ENCODE measurements at regions of chr6 and their contacts with region 1.

Region 1: DNA sequence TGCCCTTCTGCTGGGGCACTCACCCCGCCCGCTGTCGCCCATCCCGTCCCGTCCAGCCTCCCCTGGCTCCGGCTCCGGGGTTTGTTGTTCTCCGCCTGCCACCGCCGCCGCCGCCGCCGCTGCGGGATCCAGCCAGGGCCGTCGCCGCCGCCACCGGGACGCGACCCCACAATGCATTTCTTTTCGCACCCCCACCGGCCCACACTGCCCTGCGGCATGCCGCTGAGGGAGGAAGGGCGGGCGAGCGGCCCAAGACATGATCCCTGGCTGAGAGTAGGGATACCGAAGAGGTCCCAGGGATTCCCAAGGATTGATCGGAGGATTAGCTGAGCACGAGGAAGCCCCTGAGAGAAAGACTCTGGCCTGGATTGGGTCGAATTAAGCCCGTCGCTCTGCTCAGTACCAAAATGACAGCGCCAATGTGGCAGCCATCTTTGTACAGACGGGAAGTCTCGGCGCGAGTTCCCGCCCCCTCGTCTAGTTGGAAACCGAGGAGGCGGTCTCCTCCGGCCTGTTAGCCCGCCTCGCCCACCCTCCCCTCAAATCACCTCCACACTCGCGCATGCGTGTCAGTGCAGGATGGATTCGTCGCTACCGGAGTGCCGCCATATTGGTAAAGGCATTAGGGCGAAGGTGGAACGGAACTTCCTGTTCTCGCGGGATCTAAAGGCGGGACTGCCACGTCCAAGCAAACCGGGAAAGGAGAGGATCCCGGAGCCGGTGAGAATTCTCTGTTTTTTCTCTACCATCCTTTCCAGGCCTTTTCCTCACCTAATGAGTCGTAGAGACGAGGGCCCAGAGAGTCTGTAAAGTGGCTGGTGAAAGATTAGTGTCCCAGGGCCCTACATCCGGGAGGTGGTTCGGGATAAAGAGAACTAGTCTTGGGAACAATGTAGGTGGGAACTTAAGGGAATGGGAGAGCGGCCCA is at the starts of genes RXRB and SLC39A7:
- DNase-seq: peak; percentile 88 to 100 (median 94)
- ATAC-seq: peak; percentile 74
- H3K4me3 ChIP-seq: peak within 1 kb of the TSS; percentile 65
- H3K27ac ChIP-seq: peak within 1 kb of the TSS; percentile 99
- H3K4me1 ChIP-seq: peaks cover 48 to 51% of the 10 kb centered on the region in 2 experiments; a peak in 4 of 5 replicates
- H3K27me3 ChIP-seq: no peaks in the 10 kb centered on the region
- CTCF ChIP-seq: no peak
- EP300 ChIP-seq: no peak
- POLR2A ChIP-seq: peak; percentile 99
- RAD21 ChIP-seq: no peak; a peak in 1 of 4 replicates
- polyA plus RNA-seq, gene RXRB: 0.76 to 2.1 TPM
- polyA plus RNA-seq, gene SLC39A7: 21.7 to 23.5 TPM

Region 2: DNA sequence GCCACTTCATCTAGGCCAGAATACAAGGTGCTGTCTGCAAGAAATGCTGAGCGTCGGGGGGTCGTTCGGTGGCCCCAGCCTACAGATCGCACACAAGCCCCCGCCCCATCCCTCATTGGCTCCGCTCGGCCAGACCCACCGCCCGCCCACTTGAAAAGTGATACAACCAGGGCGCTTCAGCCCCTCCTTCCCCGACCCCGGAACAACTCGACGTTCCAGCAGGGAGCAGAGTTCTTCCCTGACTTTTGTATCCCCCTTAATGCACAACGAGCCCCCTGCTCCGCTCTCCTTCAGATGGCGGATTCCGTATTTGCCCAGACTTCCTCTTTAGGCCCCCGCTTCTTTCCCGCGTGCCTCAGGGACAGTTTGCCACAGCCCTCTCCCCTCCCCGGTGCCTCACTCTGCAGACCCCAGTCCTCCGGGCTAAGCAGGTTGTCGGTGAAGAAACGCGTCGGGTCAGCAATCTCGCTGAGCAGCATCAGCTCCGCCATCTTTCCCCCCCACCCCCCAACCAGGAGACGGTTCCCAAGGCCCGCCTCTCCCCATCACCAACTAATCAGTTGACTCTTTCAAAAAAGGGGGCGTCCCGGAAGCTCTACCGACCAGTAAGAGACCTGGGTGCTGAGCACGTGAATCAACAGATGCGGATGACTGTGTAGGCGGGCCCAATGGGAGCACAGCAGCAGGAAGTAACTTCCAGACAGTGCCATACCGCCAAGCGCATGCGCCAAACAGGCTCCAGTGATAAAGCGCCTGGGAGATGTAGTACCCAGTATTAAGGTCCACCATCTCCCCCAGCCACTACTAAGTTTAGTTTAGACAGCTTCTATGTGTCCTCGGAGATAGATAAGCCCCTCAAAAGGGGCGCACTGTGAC is 1072.5 kb before region 1 on chr6 and contains the start of gene ATF6B:
- CTCF ChIA-PET with region 1: no interaction called
- POLR2A ChIA-PET with region 1: no interaction called
- in situ Hi-C with region 1: no loop called
- intact Hi-C with region 1: loop called (anchors 5 kb)
- DNase-seq: peak; percentile 97 to 100 (median 98)
- ATAC-seq: peak; percentile 88
- H3K4me3 ChIP-seq: peak within 1 kb of the TSS; percentile 91
- H3K27ac ChIP-seq: peak within 1 kb of the TSS; percentile 86
- H3K4me1 ChIP-seq: peaks cover 31 to 32% of the 10 kb centered on the region in 2 experiments
- H3K27me3 ChIP-seq: no peaks in the 10 kb centered on the region
- CTCF ChIP-seq: no peak
- EP300 ChIP-seq: peak; percentile 53; the same call in 1 of the 2 replicates
- POLR2A ChIP-seq: peak; percentile 85
- RAD21 ChIP-seq: no peak
- polyA plus RNA-seq, gene ATF6B: 20.7 to 26.1 TPM

Region 3: DNA sequence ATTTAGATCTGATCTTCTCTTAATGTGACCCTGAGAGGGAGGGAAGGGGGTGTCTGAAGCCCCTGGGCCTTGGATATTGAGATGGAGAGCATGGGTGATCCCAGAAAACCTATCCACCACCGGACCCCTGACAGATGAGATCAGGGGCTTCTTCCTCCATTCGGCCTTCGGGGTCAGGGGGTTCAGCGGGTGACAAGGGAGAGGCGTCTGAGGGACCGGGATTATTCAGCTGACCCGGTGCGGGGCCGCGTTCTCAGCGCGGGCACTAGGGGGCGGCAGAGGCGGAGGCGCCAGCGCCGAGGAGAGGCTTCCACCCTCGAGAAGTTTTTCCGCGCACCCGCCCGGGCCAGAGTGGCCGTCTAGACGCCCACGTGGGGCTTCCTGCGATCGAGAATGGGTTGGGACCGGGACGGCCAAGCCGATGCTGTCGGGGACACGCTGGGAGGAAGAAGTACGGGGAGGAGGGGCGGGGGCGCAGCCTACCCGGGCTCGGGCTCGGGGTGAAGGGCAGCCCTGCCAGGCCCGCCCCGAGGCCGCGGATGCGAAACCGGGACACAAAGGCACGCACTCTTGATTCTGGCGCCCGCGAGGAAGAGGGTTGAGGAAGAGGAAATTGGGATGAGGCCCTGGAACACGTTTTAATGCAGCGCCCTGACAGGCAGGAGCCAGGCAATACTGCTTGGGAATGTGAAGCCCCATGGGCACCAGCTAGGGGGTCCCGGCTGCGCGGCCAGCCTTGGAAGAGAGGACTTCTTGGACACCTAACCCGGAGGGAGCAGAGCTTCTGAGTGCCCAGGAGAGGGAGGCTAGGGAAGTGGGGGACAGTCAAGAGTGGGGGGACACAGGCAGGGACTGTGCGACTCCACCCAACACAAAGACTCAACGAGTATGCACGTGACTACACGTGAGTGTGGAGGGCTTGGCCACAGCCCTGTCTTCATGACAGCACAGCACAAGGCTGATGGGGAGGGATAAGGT is 38.8 kb before region 1 on chr6:
- CTCF ChIA-PET with region 1: interaction called, 5 read pairs
- POLR2A ChIA-PET with region 1: no interaction called
- in situ Hi-C with region 1: no loop called
- intact Hi-C with region 1: loop called (anchors 2 kb)
- DNase-seq: peak; percentile 83 to 95 (median 93)
- ATAC-seq: peak; percentile 97
- H3K4me3 ChIP-seq: peak overlapping the region; percentile 30
- H3K27ac ChIP-seq: no peak overlapping the region
- H3K4me1 ChIP-seq: peaks cover 7 to 26% of the 10 kb centered on the region in 2 experiments; a peak in 3 of 5 replicates
- H3K27me3 ChIP-seq: peaks cover 5 to 39% of the 10 kb centered on the region in 2 experiments; a peak in 3 of 5 replicates
- CTCF ChIP-seq: peak; percentile 93 to 96 (median 94)
- EP300 ChIP-seq: no peak
- POLR2A ChIP-seq: 0 out of 2 replicates have a peak, but pooled peaks have one; percentile 32
- RAD21 ChIP-seq: peak; percentile 66 to 83

Region 4: GRCh38 chr6:33217681-33218080 is 17.2 kb after region 1 on chr6:
- CTCF ChIA-PET with region 1: no interaction called
- POLR2A ChIA-PET with region 1: no interaction called
- in situ Hi-C with region 1: no loop called
- intact Hi-C with region 1: no loop called
- DNase-seq: peak in 3 of 4 experiments; percentile 5 to 6 (median 5)
- ATAC-seq: no peak
- H3K4me3 ChIP-seq: no peak overlapping the region
- H3K27ac ChIP-seq: no peak overlapping the region
- H3K4me1 ChIP-seq: peaks cover 0 to 22% of the 10 kb centered on the region in 2 experiments; a peak in 2 of 5 replicates
- H3K27me3 ChIP-seq: peaks cover 7 to 15% of the 10 kb centered on the region in 2 experiments; a peak in 4 of 5 replicates
- CTCF ChIP-seq: no peak
- EP300 ChIP-seq: no peak
- POLR2A ChIP-seq: no peak
- RAD21 ChIP-seq: no peak

Region 5: DNA sequence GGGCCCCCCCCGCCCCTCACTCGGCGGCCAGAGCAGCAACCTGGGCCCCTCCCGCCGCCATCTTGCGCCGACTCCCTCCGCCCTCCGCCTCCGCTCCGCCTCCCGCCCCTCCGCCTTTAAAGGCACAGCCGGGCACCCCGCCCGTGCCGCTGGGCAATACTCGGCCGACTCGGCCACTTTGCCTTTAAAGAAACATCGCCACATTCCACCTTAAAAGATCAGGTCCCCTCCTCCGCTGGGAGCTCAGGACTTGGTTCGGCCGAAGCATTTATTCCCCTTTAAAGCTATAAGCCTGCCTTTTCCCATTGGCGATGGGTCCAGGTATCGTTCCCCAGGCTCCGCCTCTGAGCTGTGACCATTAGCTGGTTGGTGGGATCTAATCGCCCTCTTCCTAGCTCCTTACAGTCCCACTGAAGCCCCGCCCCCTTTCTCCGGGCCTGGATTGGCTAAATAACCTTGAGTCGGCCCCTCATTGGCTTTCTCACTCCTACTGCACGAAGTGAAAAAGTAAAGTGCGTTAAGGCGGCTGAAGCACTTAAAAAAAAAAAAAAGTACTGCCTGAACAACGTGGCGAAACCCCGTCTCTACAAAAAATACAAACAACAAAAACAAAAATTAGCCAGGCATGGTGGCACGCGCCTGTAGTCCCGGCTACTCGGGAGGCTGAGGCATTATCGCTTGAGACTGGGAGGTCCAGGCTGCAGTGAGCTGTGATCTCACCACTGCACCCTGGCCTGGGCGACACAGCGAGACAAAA is 117.4 kb after region 1 on chr6 and contains the start of gene ZBTB22:
- CTCF ChIA-PET with region 1: no interaction called
- POLR2A ChIA-PET with region 1: no interaction called
- in situ Hi-C with region 1: no loop called
- intact Hi-C with region 1: loop called (anchors 2 kb)
- DNase-seq: peak; percentile 90 to 100 (median 94)
- ATAC-seq: peak; percentile 82
- H3K4me3 ChIP-seq: peak within 1 kb of the TSS; percentile 63
- H3K27ac ChIP-seq: peak within 1 kb of the TSS; percentile 79
- H3K4me1 ChIP-seq: peaks cover 56 to 76% of the 10 kb centered on the region in 2 experiments
- H3K27me3 ChIP-seq: no peaks in the 10 kb centered on the region
- CTCF ChIP-seq: peak in 1 of 3 experiments; percentile 17; a peak in 1 of 6 replicates
- EP300 ChIP-seq: no peak
- POLR2A ChIP-seq: peak; percentile 72
- RAD21 ChIP-seq: no peak
- polyA plus RNA-seq, gene ZBTB22: 0.21 to 0.30 TPM

Region 6: DNA sequence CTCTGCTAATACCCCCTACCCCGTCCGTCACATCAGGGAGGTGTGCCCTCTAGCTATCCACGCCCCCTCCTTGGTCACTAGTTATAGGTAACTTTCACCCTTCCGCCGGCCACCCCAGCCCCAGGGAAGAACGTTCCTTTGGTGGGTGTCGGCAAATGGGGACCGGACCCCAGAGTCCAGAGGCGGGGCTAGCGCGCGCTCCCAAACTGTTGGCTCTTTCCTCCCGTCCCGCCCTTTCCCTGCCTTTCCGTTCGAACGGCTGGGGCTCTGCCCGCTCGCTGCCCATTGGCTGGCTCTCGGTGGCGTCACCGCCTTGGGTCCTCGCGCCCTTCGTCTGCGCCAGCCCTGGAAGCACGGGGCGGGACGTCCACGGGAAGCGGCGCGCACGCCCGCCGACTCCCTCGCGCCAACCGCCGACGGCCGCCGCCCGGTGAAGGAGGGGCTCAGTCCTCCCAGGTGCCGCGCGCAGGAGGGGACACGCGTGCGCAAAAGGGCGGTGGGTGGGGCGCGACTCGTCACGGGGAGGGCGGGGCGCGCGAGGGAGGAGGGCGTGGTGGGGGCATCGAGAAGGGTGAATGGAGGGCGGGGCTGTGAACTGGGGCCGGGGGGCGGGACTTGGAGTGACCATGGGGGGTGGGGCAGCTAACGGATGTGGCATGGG is 209.7 kb after region 1 on chr6:
- CTCF ChIA-PET with region 1: no interaction called
- POLR2A ChIA-PET with region 1: no interaction called
- in situ Hi-C with region 1: no loop called
- intact Hi-C with region 1: loop called (anchors 2 kb)
- DNase-seq: peak; percentile 97 to 99 (median 98)
- ATAC-seq: peak; percentile 96
- H3K4me3 ChIP-seq: peak overlapping the region; percentile 95
- H3K27ac ChIP-seq: peak overlapping the region; percentile 93
- H3K4me1 ChIP-seq: peaks cover 11 to 27% of the 10 kb centered on the region in 2 experiments; a peak in 4 of 5 replicates
- H3K27me3 ChIP-seq: no peaks in the 10 kb centered on the region
- CTCF ChIP-seq: 0 out of 6 replicates have a peak, but pooled peaks of 1 of the 3 experiments have one; percentile 1
- EP300 ChIP-seq: peak; percentile 43
- POLR2A ChIP-seq: peak; percentile 90
- RAD21 ChIP-seq: 0 out of 4 replicates have a peak, but pooled peaks of 1 of the 2 experiments have one; percentile 8

Region 7: GRCh38 chr6:33417903-33418689 is 217.6 kb after region 1 on chr6 and contains the start of gene CUTA:
- CTCF ChIA-PET with region 1: no interaction called
- POLR2A ChIA-PET with region 1: no interaction called
- in situ Hi-C with region 1: no loop called
- intact Hi-C with region 1: loop called (anchors 2 kb)
- DNase-seq: peak; percentile 95 to 100 (median 97)
- ATAC-seq: peak; percentile 93
- H3K4me3 ChIP-seq: peak within 1 kb of the TSS; percentile 84
- H3K27ac ChIP-seq: peak within 1 kb of the TSS; percentile 95
- H3K4me1 ChIP-seq: peaks cover 40 to 43% of the 10 kb centered on the region in 2 experiments
- H3K27me3 ChIP-seq: no peaks in the 10 kb centered on the region
- CTCF ChIP-seq: peak; percentile 35 to 80 (median 52); a peak in 4 of 6 replicates
- EP300 ChIP-seq: peak; percentile 33; the same call in 1 of the 2 replicates
- POLR2A ChIP-seq: peak; percentile 87
- RAD21 ChIP-seq: 0 out of 4 replicates have a peak, but pooled peaks of 1 of the 2 experiments have one; percentile 12
- polyA plus RNA-seq, gene CUTA: 653 to 682 TPM